ENCODE measurements at regions of chr5 and their contacts with region 1.

Region 1: GRCh38 chr5:90529194-90529938 is at the start of gene LYSMD3:
- DNase-seq: peak; percentile 85 to 98 (median 95)

Region 2: DNA sequence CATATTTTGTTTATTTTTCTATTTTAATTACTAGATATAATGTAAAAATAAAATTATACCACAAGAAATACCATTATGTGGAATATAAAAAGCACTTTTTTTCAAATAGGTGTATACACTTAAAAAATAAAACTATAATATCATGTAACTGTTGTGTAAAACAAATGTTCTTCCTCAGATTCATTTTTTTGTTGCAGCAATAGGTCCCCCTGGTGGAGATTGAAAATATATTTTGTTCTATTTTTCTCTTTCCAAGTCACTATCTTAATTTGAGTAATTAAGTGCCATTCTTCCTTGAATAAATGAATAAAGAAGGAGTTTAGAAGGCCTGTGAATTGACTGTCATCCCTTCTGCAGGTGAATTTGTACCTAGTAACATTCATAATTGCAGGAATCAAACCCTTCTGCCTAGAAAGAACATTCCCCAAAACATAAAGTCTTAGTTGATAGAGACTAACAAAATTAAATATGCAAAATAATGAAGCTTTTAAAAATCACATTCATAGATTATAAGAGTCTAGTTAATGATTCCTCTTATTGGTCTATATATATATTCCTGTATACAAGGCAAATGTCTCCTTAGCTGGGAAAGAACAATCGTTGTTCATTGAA is 143.2 kb before region 1 on chr5:
- intact Hi-C with region 1: no loop called
- DNase-seq: peak in 1 of 42 donors; percentile 17

Region 3: DNA sequence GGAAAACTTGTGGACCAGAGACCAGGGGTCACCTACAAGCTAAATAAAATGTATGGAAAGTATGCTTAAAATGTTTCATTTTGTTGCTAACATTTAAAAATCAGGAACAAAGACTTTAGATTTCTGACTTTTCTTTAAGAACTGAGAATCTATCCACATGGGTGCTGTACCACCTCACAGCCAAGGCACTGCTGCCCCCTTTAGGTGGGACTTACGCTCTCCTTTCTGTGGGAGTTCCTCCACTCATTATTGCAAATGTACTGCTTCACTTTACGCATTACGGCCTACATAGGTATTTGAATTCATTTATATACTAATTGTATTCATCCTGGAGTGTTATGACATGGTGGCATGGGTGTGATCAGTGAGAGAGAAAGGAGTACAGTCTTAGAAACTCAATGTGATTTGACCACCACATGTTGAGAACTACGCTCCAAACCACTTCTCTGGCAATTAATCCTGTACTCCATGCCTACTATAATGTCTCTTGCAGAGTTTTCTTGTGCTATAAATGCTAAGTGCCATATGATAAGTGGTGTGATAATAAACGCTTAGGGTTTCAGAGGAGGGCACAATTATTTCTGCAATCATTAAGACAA is 95.2 kb before region 1 on chr5:
- intact Hi-C with region 1: loop called (anchors 10 kb)
- DNase-seq: peak in 40 of 42 donors; percentile 32 to 85 (median 60)

Region 4: DNA sequence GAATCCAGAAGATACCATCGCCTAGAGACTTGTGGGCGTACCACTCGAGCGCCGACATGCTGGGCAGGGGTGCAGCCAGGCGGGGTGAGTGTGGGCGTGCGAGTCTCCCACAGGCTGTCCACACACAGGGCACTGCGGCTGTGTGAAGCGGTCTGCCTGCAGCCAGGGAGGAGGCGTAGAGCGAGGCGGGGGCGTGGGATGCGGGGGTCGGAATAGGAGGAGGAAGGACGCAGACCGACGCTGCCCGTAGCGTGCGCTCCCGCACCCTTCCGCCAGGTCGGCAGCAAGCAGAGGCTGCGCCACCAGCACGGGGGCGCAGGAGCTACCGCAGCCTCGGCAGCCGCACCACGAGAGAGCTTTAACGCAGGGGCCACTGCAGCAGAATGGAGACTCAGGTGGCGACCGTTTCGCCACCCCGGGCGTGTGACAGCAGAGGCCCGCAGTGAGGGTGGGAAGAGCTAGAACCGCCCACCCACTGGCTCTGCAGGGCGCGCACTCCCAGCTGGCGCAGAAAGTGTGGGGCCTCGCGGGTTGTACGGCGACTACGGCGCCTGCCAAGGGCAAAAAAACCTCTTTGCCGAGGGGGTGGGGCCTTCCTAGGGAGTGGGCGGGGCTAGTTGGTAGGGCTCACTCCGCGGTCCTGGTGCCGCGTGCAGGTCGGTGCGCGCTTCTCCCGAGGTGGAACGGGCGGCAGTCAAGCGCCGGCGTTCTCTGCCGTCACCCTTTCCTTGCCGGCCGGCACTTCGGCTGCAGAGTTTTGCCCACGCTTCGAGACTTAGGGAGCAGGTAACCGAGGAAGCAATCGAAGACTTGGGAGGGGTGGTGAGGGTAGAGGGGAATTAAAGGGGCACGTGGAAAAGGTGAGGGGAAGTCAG is 54.9 kb before region 1 on chr5 and contains the starts of genes MBLAC2 and POLR3G:
- intact Hi-C with region 1: loop called (anchors 2 kb)
- DNase-seq: peak; percentile 79 to 97 (median 93)

Measured in head of caudate nucleus (tissue), 42 donors.